HepG2 (cell line): ENCODE measurements at regions of chr2 and their contacts with region 1.

Region 1: DNA sequence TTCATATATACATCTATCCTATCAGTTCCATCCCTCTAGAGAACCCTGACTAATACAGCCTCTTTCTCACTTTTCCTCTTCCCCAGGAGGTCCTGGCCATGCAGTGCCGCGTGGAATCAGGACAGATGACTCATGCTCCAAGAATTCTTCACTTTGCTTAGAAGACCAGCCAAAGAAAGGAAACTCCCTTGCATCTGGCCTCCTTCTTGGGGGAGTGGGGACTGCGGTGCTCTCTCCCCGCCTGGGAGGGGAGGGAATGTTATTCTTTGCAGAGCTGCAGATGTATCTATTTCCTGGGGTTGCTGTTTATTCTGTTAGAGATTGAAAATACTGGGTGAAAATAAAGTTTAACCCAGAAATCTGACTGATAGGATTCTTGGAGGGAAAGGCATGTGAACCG is 111.5 kb upstream of the SH3BP4 start:
- DNase-seq: peak; percentile 69
- ATAC-seq: peak; percentile 26
- H3K4me3 ChIP-seq: no peak overlapping the region
- H3K27ac ChIP-seq: no peak overlapping the region
- H3K4me1 ChIP-seq: peaks cover 95% of the 10 kb centered on the region
- H3K27me3 ChIP-seq: no peaks in the 10 kb centered on the region
- CTCF ChIP-seq: no peak
- EP300 ChIP-seq: peak in 1 of 2 experiments; percentile 24; a peak in 1 of 4 replicates
- POLR2A ChIP-seq: no peak
- RAD21 ChIP-seq: no peak

Region 2: DNA sequence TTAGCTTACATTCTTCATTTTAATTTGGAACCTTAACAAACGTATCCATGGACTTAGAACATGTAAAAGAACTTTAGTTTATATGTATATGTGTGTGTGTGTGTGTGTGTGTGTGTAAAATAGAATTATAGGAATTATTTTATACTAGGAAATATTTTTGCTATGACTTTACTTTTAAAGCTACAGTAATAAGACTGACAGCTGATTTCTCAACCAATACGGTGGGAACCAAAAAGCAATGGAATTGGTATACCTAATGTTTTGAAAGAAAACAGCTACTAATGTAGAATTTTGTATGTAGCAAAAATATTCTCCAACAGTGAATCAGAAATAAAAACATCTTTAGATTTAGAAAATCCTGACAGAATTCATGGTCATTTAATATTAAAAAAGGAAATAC is 196.9 kb before region 1 on chr2:
- CTCF ChIA-PET with region 1: no interaction called
- POLR2A ChIA-PET with region 1: no interaction called
- in situ Hi-C with region 1: no loop called
- intact Hi-C with region 1: no loop called
- DNase-seq: no peak
- ATAC-seq: no peak
- H3K4me3 ChIP-seq: no peak overlapping the region
- H3K27ac ChIP-seq: no peak overlapping the region
- H3K4me1 ChIP-seq: peaks cover 16% of the 10 kb centered on the region
- H3K27me3 ChIP-seq: no peaks in the 10 kb centered on the region
- CTCF ChIP-seq: no peak
- EP300 ChIP-seq: no peak
- POLR2A ChIP-seq: no peak
- RAD21 ChIP-seq: no peak

Region 3: GRCh38 chr2:234792621-234793022 is 47.7 kb before region 1 on chr2:
- CTCF ChIA-PET with region 1: no interaction called
- POLR2A ChIA-PET with region 1: no interaction called
- in situ Hi-C with region 1: no loop called
- intact Hi-C with region 1: no loop called
- DNase-seq: no peak
- ATAC-seq: no peak
- H3K4me3 ChIP-seq: no peak overlapping the region
- H3K27ac ChIP-seq: no peak overlapping the region
- H3K4me1 ChIP-seq: peaks cover 33% of the 10 kb centered on the region
- H3K27me3 ChIP-seq: no peaks in the 10 kb centered on the region
- CTCF ChIP-seq: no peak
- EP300 ChIP-seq: no peak
- POLR2A ChIP-seq: no peak
- RAD21 ChIP-seq: no peak

Region 4: DNA sequence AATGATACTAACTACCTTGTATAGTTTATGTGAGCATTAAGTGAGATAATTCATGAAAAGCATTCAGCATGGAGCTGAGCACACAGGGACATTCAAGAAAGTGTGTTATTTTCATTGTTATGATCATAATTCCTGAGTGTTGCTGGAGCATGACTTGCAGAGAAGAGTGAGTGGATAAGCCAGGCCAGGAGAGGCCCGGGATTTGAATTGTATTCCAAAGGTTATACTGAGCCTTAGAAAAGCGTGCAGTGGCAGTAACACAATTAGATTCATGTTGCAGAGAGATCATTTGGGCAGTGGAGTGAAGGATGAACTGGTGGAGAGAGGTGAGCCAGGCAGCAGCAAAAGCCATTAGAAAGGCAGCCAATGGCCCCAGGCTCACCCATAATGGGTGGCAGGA is 31.4 kb before region 1 on chr2:
- CTCF ChIA-PET with region 1: no interaction called
- POLR2A ChIA-PET with region 1: no interaction called
- in situ Hi-C with region 1: no loop called
- intact Hi-C with region 1: no loop called
- DNase-seq: no peak
- ATAC-seq: no peak
- H3K4me3 ChIP-seq: no peak overlapping the region
- H3K27ac ChIP-seq: no peak overlapping the region
- H3K4me1 ChIP-seq: peaks cover 10% of the 10 kb centered on the region
- H3K27me3 ChIP-seq: peaks cover 4% of the 10 kb centered on the region in 2 experiments; a peak in 4 of 5 replicates
- CTCF ChIP-seq: no peak
- EP300 ChIP-seq: no peak
- POLR2A ChIP-seq: no peak
- RAD21 ChIP-seq: no peak

Region 5: DNA sequence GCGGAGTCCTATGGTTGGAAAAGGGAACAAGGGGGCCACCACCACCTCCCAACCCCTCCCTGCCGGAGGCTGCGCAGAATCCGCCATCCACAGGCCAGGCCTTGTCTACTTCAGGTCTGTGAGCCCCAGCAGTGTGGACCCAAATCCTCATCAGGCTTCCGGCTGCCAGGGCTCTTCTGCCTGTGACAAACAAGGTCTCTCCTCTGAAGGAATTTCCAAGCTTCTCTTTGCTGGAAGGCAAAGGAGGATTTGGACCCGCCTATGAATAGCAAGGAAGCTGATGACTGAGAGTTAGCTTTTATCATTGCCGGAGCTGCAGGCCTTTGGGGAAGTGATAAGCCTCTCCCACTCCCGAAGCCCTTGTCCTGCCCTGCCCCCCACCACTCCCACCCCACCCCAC is 17.8 kb after region 1 on chr2:
- CTCF ChIA-PET with region 1: no interaction called
- POLR2A ChIA-PET with region 1: interaction called, 15 read pairs
- in situ Hi-C with region 1: no loop called
- intact Hi-C with region 1: no loop called
- DNase-seq: no peak
- ATAC-seq: no peak
- H3K4me3 ChIP-seq: no peak overlapping the region
- H3K27ac ChIP-seq: no peak overlapping the region
- H3K4me1 ChIP-seq: peaks cover 84% of the 10 kb centered on the region
- H3K27me3 ChIP-seq: no peaks in the 10 kb centered on the region
- CTCF ChIP-seq: no peak
- EP300 ChIP-seq: no peak
- POLR2A ChIP-seq: no peak
- RAD21 ChIP-seq: no peak